Activated CD4-positive, alpha-beta memory T cell treated with anti-CD3 and anti-CD28 coated beads for 36 hours (primary cell): ENCODE measurements at regions of chr1 and their contacts with region 1.

Region 1: GRCh38 chr1:225923692-225924555 is at the start of gene PYCR2:
- DNase-seq: peak; percentile 97
- H3K4me3 Mint-ChIP-seq: peak within 1 kb of the TSS; percentile 95
- H3K27ac Mint-ChIP-seq: peak within 1 kb of the TSS; percentile 92
- H3K4me1 Mint-ChIP-seq: peaks cover 37% of the 10 kb centered on the region
- H3K27me3 Mint-ChIP-seq: no peaks in the 10 kb centered on the region
- total RNA-seq, gene PYCR2: 127 TPM

Region 2: DNA sequence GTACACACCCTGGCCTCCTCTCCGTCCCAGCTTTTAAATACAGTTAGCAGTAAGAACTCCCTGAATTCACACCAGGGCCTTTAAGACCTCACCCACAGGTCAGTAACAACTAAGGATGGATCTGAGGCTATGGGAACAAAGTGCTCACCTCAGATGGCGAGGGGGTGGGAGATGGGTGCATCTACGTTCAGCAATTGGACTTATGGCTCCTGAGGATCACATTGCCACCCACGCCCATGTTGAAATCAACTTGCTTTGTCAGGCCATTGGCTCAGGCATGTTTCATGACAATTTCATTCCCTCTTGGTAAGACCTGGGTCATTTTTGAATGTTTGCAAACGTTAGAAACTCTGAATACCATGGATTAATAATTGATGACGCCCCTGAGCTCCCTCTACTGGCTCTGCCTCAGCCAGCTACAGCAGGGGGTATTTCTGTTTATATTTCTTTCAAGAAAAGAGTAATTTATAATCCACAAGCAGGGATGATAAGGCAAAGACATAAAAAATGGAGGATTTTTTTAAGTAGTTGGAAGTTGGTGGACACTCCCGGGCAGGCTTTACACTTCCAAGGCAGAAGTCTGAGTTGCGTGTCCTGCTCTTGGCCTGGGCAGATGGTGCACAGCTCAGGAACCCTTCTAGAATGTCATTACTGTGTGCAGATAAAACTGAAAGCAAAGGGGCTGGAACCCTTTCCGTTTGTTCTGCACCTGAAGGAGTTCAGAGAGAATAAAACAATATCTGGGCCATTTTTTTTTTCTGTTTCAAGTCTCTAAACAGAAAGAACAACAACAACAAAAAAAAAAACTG is 482.4 kb before region 1 on chr1:
- CTCF ChIA-PET with region 1: no interaction called
- POLR2A ChIA-PET with region 1: no interaction called
- intact Hi-C with region 1: loop called (anchors 1 kb)
- DNase-seq: no peak
- H3K4me3 Mint-ChIP-seq: no peak overlapping the region
- H3K27ac Mint-ChIP-seq: peak overlapping the region; percentile 64
- H3K4me1 Mint-ChIP-seq: peaks cover 46% of the 10 kb centered on the region
- H3K27me3 Mint-ChIP-seq: no peaks in the 10 kb centered on the region

Region 3: GRCh38 chr1:225467193-225468020 is 456.5 kb before region 1 on chr1:
- CTCF ChIA-PET with region 1: no interaction called
- POLR2A ChIA-PET with region 1: interaction called, 7 read pairs
- intact Hi-C with region 1: loop called (anchors 1 kb)
- DNase-seq: peak; percentile 91
- H3K4me3 Mint-ChIP-seq: peak overlapping the region; percentile 92
- H3K27ac Mint-ChIP-seq: peak overlapping the region; percentile 99
- H3K4me1 Mint-ChIP-seq: peaks cover 26% of the 10 kb centered on the region
- H3K27me3 Mint-ChIP-seq: no peaks in the 10 kb centered on the region

Region 4: GRCh38 chr1:225881969-225882693 is 41.8 kb before region 1 on chr1 and contains the start of gene TMEM63A:
- CTCF ChIA-PET with region 1: interaction called, 6 read pairs
- POLR2A ChIA-PET with region 1: interaction called, 7 read pairs
- intact Hi-C with region 1: loop called (anchors 1 kb)
- DNase-seq: peak; percentile 92
- H3K4me3 Mint-ChIP-seq: peak within 1 kb of the TSS; percentile 88
- H3K27ac Mint-ChIP-seq: peak within 1 kb of the TSS; percentile 92
- H3K4me1 Mint-ChIP-seq: peaks cover 49% of the 10 kb centered on the region
- H3K27me3 Mint-ChIP-seq: no peaks in the 10 kb centered on the region
- total RNA-seq, gene TMEM63A: 52.2 to 59.1 TPM

Region 5: DNA sequence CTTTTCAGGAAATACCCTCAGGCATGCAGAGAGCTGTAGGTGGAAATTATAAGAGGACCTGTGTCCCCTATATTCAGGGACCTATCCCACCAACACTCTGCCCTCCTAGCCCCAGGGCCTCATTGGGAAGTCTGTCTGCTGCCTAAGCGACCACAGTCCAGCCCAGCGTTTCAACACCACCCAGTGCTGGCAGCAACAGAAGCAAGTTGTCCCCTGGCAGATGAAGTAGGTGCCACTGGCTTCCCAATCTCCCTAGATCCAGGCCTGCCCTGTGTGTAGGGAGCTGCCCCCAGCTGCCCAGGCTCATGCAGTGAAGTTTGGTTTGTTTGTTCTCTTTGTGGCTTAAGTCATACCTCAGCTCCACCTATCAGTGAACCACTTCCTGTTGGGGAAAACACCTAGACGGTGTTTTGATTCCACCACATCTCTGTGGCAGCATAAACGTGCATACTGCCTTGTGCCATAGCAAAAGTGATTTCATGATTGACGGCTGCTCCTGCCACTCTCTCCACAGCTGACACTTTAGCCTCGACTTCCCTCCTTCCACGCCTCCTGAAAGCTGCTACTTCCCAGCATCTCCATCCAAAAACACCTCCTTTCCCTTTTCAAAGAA is 26.9 kb before region 1 on chr1:
- CTCF ChIA-PET with region 1: no interaction called
- POLR2A ChIA-PET with region 1: interaction called, 14 read pairs
- intact Hi-C with region 1: loop called (anchors 1 kb)
- DNase-seq: peak; percentile 83
- H3K4me3 Mint-ChIP-seq: peak overlapping the region; percentile 54
- H3K27ac Mint-ChIP-seq: peak overlapping the region; percentile 85
- H3K4me1 Mint-ChIP-seq: peaks cover 37% of the 10 kb centered on the region
- H3K27me3 Mint-ChIP-seq: no peaks in the 10 kb centered on the region

Region 6: GRCh38 chr1:225953315-225953714 is 29.4 kb after region 1 on chr1:
- CTCF ChIA-PET with region 1: no interaction called
- POLR2A ChIA-PET with region 1: no interaction called
- intact Hi-C with region 1: no loop called
- DNase-seq: no peak
- H3K4me3 Mint-ChIP-seq: no peak overlapping the region
- H3K27ac Mint-ChIP-seq: no peak overlapping the region
- H3K4me1 Mint-ChIP-seq: no peaks in the 10 kb centered on the region
- H3K27me3 Mint-ChIP-seq: peaks cover 13% of the 10 kb centered on the region

Region 7: DNA sequence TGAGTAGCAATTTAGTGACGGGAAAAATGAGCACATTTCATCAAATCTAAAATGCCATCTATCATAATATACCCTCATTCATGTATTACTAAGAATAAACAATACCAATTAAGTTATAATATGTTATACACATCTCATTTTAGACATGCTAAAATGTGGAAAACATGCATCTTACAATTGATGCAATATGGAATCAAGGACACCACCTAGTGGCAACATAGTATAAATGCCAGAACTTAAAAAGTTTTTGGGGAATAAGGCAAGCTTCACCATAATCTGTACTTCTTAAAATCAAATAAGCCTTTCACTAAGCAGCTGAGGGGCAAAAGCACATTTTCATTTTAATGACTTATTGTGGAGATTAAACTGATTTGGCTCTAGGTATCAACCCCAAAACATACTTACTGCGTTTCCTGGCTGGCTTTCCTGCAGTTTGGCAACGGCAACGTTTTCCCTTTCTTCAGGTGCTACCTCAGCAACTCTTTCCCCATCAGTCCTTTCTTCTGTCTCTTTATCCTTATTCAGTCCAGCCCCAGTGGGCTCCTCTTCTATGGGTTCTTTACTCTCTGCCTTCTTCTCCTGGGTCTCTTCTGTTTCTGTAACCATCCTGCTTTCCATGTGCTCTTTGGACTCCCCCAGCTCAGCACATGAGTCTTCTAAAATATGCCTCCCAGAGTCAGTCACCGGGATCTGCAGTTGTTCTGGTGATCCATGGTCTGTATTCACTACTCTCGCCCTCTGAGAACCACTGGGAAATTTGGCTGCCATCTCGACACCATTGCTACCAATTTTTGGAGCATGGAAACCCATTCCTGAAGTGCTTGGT is 63.8 kb after region 1 on chr1:
- CTCF ChIA-PET with region 1: interaction called, 11 read pairs
- POLR2A ChIA-PET with region 1: interaction called, 3 read pairs
- intact Hi-C with region 1: no loop called
- DNase-seq: no peak
- H3K4me3 Mint-ChIP-seq: no peak overlapping the region
- H3K27ac Mint-ChIP-seq: peak overlapping the region; percentile 19
- H3K4me1 Mint-ChIP-seq: peaks cover 29% of the 10 kb centered on the region
- H3K27me3 Mint-ChIP-seq: no peaks in the 10 kb centered on the region

Region 8: GRCh38 chr1:225999227-225999911 is 75.4 kb after region 1 on chr1 and contains the start of gene SDE2:
- CTCF ChIA-PET with region 1: no interaction called
- POLR2A ChIA-PET with region 1: interaction called, 8 read pairs
- intact Hi-C with region 1: loop called (anchors 1 kb)
- DNase-seq: peak; percentile 100
- H3K4me3 Mint-ChIP-seq: peak within 1 kb of the TSS; percentile 100
- H3K27ac Mint-ChIP-seq: peak within 1 kb of the TSS; percentile 96
- H3K4me1 Mint-ChIP-seq: peaks cover 66% of the 10 kb centered on the region
- H3K27me3 Mint-ChIP-seq: no peaks in the 10 kb centered on the region
- total RNA-seq, gene SDE2: 18.0 to 18.2 TPM

Region 9: GRCh38 chr1:226092965-226093364 is 169.0 kb after region 1 on chr1:
- CTCF ChIA-PET with region 1: no interaction called
- POLR2A ChIA-PET with region 1: no interaction called
- intact Hi-C with region 1: no loop called
- DNase-seq: no peak
- H3K4me3 Mint-ChIP-seq: no peak overlapping the region
- H3K27ac Mint-ChIP-seq: no peak overlapping the region
- H3K4me1 Mint-ChIP-seq: no peaks in the 10 kb centered on the region
- H3K27me3 Mint-ChIP-seq: peaks cover 2% of the 10 kb centered on the region